ENCODE measurements at regions of chr10 and their contacts with region 1.

Region 1: DNA sequence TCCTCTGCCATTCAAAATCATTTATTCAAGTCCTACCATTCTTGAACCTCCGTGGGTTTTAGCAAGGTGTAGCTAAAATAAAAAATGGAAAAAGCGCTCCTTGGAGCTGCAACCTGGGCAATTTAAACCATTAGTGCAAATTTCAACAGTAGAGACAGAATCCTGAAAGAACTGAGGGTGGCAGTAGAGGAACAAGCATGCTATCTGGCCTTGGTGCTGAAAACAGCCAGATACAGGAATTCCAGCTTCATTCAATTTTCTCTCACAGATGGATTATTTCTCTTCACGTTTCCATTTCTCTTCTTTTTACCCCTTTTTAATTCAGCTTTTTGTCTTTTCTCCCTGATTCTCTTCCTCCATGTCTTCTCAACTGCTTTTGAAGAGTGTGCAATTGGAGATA is 77.7 kb downstream of the OTUD1 start:
- DNase-seq: peak in 3 of 14 experiments; percentile 11 to 41 (median 34)
- ATAC-seq: no peak
- H3K4me3 ChIP-seq: no peak overlapping the region
- H3K4me3 Mint-ChIP-seq: no peak overlapping the region
- H3K27ac ChIP-seq: no peak overlapping the region
- H3K27ac Mint-ChIP-seq: no peak overlapping the region
- H3K4me1 ChIP-seq: no peaks in the 10 kb centered on the region
- H3K4me1 Mint-ChIP-seq: no peaks in the 10 kb centered on the region
- H3K27me3 ChIP-seq: peaks cover 3 to 8% of the 10 kb centered on the region in 2 experiments
- H3K27me3 Mint-ChIP-seq: peaks cover 50% of the 10 kb centered on the region
- CTCF ChIP-seq: peak; percentile 69

Region 2: DNA sequence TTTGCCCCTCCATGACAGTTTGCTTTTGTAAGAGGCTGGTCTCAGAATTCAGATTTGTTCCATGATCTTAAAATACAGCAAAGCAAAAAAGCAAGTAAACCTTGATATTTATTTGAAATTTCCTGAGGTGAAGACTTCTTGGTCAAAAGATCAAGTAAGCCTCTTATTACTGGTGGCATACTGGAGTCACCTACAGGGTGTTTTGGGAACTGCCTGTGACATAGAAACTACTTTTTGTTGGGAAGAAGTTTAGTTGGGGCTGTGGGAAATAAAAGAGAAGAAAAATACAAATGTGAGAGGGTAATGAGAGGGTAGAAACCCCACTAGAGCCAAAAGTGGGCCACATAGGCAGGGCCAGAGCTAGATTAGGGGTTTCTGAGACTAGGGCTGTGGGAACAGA is 140.2 kb after region 1 on chr10:
- CTCF ChIA-PET with region 1: no interaction called
- POLR2A ChIA-PET with region 1: no interaction called
- intact Hi-C with region 1: loop called (anchors 1 to 5 kb)
- DNase-seq: peak in 3 of 14 experiments; percentile 8 to 32 (median 32)
- ATAC-seq: no peak
- H3K4me3 ChIP-seq: no peak overlapping the region
- H3K4me3 Mint-ChIP-seq: no peak overlapping the region
- H3K27ac ChIP-seq: no peak overlapping the region
- H3K27ac Mint-ChIP-seq: no peak overlapping the region
- H3K4me1 ChIP-seq: no peaks in the 10 kb centered on the region
- H3K4me1 Mint-ChIP-seq: no peaks in the 10 kb centered on the region
- H3K27me3 ChIP-seq: no peaks in the 10 kb centered on the region
- H3K27me3 Mint-ChIP-seq: peaks cover 17% of the 10 kb centered on the region
- CTCF ChIP-seq: peak; percentile 26

Region 3: DNA sequence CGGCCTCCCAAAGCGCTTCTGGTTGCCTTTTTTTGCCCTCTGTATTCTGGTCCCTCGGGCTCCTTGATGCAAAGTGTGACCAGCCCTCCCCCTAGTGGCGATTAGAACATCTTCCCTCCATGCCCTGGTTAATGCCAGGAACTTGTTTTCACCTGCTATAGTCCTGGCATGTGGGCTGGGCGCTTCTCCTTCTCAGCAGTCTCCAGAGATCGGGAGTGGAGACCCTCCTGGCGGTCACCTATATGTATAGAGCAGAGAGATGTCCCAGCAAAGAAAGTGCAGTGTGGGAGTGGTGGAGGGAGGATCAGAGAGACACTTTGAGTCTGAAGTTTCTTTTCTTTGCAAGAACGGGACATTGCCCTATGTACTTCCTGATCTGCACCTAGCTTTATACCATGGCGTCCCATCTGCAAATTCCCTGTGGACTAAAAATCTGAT is 186.5 kb after region 1 on chr10:
- CTCF ChIA-PET with region 1: no interaction called
- POLR2A ChIA-PET with region 1: no interaction called
- intact Hi-C with region 1: loop called (anchors 1 to 2 kb)
- DNase-seq: peak; percentile 17 to 77 (median 38)
- ATAC-seq: peak; percentile 73
- H3K4me3 ChIP-seq: no peak overlapping the region
- H3K4me3 Mint-ChIP-seq: no peak overlapping the region
- H3K27ac ChIP-seq: no peak overlapping the region
- H3K27ac Mint-ChIP-seq: no peak overlapping the region
- H3K4me1 ChIP-seq: no peaks in the 10 kb centered on the region
- H3K4me1 Mint-ChIP-seq: no peaks in the 10 kb centered on the region
- H3K27me3 ChIP-seq: peaks cover 0 to 7% of the 10 kb centered on the region in 2 experiments
- H3K27me3 Mint-ChIP-seq: peaks cover 43% of the 10 kb centered on the region
- CTCF ChIP-seq: peak; percentile 71

Region 4: GRCh38 chr10:24193330-24193729 is 676.8 kb after region 1 on chr10:
- CTCF ChIA-PET with region 1: no interaction called
- POLR2A ChIA-PET with region 1: no interaction called
- intact Hi-C with region 1: loop called in 1 of 2 experiments (anchors 2 kb)
- DNase-seq: no peak
- ATAC-seq: no peak
- H3K4me3 ChIP-seq: no peak overlapping the region
- H3K4me3 Mint-ChIP-seq: no peak overlapping the region
- H3K27ac ChIP-seq: no peak overlapping the region
- H3K27ac Mint-ChIP-seq: no peak overlapping the region
- H3K4me1 ChIP-seq: no peaks in the 10 kb centered on the region
- H3K4me1 Mint-ChIP-seq: no peaks in the 10 kb centered on the region
- H3K27me3 ChIP-seq: no peaks in the 10 kb centered on the region
- H3K27me3 Mint-ChIP-seq: peaks cover 3% of the 10 kb centered on the region
- CTCF ChIP-seq: no peak

Measured in CD4-positive, alpha-beta T cell (primary cell).